GM10248 (cell line): ENCODE measurements at regions of chr7 and their contacts with region 1.

Region 1: GRCh38 chr7:2698581-2699288 is 10.7 kb downstream of the AMZ1 start:
- DNase-seq: peak; percentile 92
- CTCF ChIP-seq: no peak

Region 2: DNA sequence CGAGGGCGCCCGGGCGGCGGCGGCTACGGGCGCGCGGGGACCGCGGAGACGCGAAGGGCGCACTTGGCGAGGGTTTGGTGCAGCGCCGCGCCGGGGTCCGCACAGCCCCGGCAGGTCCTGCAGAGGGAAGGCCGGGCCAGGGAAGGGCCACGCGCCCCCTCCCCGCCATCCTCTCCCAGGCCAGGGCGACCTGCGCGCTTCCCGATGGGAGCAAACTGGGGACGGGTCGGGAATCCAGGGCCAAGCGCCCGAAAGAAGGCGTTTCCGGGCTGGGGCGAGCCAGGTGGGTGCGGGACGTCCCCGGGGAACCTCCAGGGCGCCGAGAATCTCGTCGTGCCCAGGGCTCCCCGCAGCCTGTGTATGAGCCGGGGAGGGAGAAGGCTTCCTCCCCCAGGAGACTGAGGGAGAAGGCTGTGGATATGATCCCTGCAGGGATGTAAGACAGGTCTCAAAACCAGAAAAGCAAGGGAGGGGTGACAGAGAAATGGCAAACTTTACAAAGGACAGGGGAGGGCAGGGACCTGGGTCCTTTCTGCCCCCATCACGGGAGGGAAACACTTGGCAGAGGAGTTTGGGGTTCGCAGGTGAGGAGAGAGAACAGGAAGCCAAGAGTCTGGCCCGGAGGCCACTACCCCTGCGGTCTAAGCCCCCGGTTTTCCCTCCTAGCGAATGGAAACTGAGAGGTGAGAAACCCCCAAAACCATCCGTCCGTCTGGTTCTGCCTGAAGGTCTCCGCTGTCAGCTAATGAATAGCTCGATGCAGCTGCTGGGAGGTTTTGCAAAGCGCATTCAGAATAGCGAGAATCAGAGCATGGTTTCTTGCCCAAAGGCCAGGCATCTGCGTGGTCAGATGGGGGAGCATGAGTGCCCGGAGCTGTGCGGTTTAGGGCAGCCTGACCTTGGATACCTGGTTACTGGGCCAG is 10.1 kb before region 1 on chr7:
- CTCF ChIA-PET with region 1: interaction called, 10 read pairs
- POLR2A ChIA-PET with region 1: no interaction called
- DNase-seq: peak; percentile 78
- CTCF ChIP-seq: no peak

Region 3: DNA sequence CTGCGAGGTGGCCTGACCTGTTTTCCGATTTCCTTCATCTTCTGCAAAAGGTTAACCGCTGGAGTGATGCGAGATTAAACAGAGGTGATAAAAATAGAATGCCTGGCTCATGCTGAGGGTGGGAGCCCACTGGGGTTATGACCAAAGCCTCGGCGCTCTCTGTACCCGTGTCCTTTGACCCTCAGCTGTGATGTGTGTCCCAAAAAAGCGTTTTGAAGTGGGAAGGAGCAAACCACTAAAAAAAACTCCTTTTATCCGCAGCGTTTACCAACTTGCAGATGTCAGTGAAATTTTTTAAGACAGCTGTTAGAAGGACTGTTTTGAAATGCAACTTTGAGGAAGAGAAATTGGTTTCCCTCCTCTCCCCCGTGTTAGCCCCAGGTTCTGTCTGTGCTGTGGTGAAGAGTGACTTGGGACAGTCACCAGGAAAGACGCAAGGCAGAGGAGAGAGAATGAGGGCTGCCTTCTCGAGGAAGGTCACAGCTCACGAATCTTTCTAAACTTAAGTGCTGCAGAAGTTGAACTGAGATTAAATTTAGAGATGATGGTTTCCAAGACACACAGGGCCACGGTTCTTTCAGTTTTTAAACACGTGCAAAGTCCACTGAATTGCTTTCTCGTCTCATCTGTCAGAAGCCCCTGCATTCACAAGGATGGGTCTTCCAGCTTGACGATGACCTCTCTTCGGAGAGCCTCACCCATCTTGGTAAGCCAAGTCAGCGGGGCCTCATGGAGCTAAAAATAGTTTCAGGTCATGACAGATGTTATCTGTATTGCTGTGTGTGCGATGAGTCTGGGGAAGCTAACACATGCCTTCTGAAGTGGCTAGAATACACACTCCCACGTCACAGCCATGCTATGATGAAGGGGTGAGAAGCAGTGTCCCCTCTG is 16.9 kb after region 1 on chr7:
- CTCF ChIA-PET with region 1: interaction called, 65 read pairs
- POLR2A ChIA-PET with region 1: interaction called, 4 read pairs
- DNase-seq: no peak
- CTCF ChIP-seq: no peak

Region 4: GRCh38 chr7:2720582-2721491 is 22.1 kb after region 1 on chr7:
- CTCF ChIA-PET with region 1: interaction called, 16 read pairs
- POLR2A ChIA-PET with region 1: no interaction called
- DNase-seq: peak; percentile 91
- CTCF ChIP-seq: peak; percentile 39

Region 5: GRCh38 chr7:2903682-2904162 is 205.0 kb after region 1 on chr7:
- CTCF ChIA-PET with region 1: no interaction called
- POLR2A ChIA-PET with region 1: no interaction called
- DNase-seq: no peak
- CTCF ChIP-seq: no peak